Heart right ventricle (tissue), 16 donors: ENCODE measurements at regions of chr5 and their contacts with region 1.

Region 1: GRCh38 chr5:73498057-73499008 is at the start of gene BTF3:
- DNase-seq: peak; percentile 96
- ATAC-seq: peak; percentile 96 to 100 (median 99)
- H3K4me3 ChIP-seq: peak within 1 kb of the TSS; percentile 77 to 97 (median 90)
- H3K27ac ChIP-seq: peak within 1 kb of the TSS; percentile 88 to 97 (median 92)
- H3K4me1 ChIP-seq: peaks cover 2 to 40% (median 30%) of the 10 kb centered on the region in 9 donors
- H3K27me3 ChIP-seq: no peaks in the 10 kb centered on the region
- CTCF ChIP-seq: no peak
- total RNA-seq, gene BTF3: 359 to 410 (median 399) TPM

Region 2: GRCh38 chr5:73448463-73449136 is 49.7 kb before region 1 on chr5 and contains the start of gene FOXD1:
- intact Hi-C with region 1: loop called in 1 of 10 experiments (anchors 2 kb)
- DNase-seq: peak; percentile 45 to 59
- ATAC-seq: peak; percentile 72 to 89 (median 79)
- H3K4me3 ChIP-seq: peak within 1 kb of the TSS; percentile 23 to 64 (median 46)
- H3K27ac ChIP-seq: peak within 1 kb of the TSS in 1 of 10 donors; percentile 50
- H3K4me1 ChIP-seq: peaks cover 7 to 47% (median 19%) of the 10 kb centered on the region in 9 donors
- H3K27me3 ChIP-seq: peaks cover 63 to 94% (median 92%) of the 10 kb centered on the region in 7 donors
- CTCF ChIP-seq: peak in 1 of 9 donors; percentile 5
- total RNA-seq, gene FOXD1: 0.10 to 0.15 (median 0.13) TPM in 4 of 10 donors, not detected in the others

Region 3: DNA sequence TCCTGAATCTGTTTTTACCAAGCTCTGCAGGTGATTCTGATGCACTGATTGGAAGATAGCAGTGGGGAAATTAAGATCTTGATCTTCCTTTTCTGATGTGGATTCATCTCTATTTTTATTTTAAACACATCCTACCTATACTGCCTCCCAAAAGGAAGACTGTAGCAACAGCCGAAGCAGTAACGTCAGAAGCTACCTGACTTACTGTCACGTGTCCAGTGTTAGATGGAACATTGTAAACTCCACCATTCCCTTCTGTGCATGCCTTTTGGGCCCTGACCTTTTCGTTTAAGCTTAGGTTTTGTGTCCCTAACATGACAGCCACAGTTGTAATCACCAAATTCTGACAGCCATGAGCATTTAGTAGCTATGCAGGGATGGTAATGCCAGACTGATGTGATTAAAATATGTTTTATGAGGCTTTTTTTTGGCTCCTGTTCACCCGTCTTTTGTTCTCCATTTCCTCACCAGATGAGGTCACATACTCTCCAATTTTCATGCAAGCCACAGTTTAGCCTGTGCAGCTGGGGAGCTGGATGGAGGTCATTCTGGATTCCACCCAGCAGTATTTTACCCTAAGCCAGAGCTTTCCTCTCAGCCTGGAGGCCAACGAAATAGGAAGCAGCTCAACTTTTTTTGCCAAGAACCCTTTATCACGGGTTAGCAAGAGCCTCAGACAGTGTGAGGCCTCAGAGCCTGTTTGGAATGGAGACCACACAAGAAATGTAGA is 34.2 kb before region 1 on chr5:
- intact Hi-C with region 1: no loop called
- DNase-seq: peak in 1 of 2 donors; percentile 37
- ATAC-seq: peak; percentile 59 to 97 (median 94)
- H3K4me3 ChIP-seq: no peak overlapping the region
- H3K27ac ChIP-seq: peak overlapping the region in 3 of 10 donors; percentile 1 to 51 (median 4)
- H3K4me1 ChIP-seq: peaks cover 0 to 13% (median 4%) of the 10 kb centered on the region in 9 donors
- H3K27me3 ChIP-seq: peaks cover 0 to 25% (median 21%) of the 10 kb centered on the region in 7 donors
- CTCF ChIP-seq: no peak

Region 4: DNA sequence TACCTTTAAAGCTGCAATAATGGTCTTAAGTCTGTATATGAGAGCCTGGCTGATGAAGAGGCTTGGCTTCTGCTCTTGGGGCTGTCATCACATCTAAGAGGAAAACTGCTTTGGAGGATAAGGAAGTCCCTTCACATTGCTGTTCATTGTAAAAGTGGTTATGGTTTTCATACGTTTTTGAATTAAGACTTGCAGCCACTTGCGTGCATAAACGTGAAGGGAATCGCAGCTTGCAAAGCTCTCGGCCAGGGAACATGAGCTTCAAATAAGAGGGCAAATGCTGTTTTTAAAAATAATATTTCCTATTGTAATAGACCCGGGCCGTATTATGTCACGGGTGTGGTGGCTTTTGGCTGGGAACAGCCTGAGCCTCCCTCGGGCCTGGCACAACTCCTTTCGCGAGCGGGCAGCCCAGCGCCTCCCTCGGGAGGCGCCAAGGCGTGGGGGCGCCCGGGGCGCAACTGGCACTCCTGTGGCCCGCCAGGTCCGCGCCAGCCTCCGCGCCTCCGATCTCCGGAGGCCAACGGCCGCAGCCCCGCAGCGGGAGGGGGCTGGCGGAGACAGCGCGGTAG is 127.1 kb after region 1 on chr5:
- intact Hi-C with region 1: no loop called
- DNase-seq: no peak
- ATAC-seq: peak; percentile 7 to 75 (median 40)
- H3K4me3 ChIP-seq: peak overlapping the region in 9 of 10 donors; percentile 48 to 75 (median 69)
- H3K27ac ChIP-seq: peak overlapping the region in 6 of 10 donors; percentile 38 to 77 (median 59)
- H3K4me1 ChIP-seq: peaks cover 0 to 23% (median 14%) of the 10 kb centered on the region in 9 donors
- H3K27me3 ChIP-seq: peaks cover 0 to 40% (median 8%) of the 10 kb centered on the region in 7 donors
- CTCF ChIP-seq: no peak